GM10248 (cell line): ENCODE measurements at regions of chr20 and their contacts with region 1.

Region 1: DNA sequence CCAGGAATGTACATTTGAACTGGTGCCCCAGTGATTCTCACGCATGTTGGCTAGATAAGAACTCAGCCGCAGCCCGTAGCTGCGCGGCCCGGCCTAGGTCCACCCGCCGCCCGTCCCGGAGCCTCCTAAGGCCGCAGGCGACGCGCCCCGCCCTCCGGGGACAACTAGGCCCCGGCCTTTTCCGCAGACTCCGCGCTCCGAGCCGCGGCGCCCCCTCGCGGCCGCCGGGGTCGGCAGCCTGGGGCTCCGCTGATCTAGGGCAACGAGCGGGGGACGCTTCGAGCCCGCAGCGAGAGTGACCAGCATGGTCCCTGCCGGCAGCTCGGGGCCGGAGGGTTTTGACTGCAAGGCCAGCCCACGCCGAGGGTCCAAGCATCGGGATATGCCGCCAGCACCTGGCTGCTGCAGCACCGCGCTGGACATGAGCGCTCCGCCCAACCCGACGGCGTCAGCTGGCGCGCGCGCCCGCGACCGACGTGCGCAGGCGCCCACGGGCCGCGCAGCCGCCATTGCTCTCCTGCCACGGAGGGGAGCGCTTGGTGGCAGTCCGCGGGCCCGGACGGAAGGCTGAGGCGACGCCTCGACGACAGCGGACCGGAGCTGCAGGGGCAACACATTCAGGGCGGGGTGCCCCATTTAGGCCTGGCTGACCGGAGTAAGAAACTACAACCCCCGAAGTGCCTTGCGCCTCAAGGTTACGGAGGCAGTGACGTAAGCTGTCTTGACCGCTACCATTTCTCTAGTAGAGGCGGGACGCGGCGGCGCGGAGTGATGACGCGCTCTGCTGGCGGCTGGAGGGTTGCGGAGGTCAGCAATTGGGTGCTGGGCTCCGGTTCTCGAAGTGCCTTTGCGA is at the start of gene AP5S1:
- DNase-seq: peak; percentile 92
- CTCF ChIP-seq: peak; percentile 96

Region 2: DNA sequence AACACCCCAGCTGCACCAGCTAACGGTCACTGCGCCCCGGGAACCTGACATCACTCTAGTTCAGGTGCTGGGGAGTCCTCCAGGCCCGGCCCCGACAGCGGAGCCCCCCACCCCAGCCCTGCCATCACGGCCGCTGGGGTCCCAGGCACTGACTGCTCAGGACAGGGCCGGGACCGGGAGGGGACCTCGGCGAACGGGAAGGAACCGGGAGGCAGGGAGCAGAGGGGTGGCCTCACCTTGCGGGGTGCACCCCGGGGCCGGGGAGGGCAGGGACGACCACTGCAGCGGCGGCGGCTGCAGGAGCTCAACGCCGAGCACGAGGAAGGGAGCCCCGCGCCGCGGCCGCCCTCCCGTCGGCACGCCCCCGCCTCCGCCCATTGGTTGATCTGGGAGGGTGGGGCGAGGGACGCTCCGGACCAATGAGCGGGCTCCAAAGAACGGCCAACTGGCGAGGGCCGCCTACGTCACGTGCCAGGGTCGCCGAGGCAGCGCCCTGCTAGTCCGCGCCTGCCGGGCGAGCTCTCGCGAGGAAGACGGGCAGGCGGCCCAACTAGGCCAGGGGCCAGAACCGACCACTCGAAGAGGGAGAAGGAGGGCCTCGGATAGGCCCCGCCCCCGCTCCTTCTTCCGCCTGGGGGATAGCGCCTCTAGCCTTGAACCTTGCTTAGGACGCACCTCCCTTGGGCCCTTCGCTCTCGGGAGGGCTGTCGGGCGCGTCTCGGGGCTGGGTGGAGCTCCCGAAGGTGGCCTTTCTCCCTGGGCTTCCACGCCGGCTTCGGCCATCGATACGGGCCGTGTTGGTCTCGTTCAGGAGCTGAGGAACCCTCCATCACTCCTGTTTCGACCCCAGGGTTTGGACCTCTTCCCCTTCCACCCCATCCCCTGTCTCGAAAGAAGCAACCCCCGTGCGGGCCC is 52.6 kb before region 1 on chr20 and contains the start of gene ADISSP:
- CTCF ChIA-PET with region 1: interaction called, 12 read pairs
- POLR2A ChIA-PET with region 1: no interaction called
- DNase-seq: peak; percentile 100
- CTCF ChIP-seq: peak; percentile 21

Region 3: DNA sequence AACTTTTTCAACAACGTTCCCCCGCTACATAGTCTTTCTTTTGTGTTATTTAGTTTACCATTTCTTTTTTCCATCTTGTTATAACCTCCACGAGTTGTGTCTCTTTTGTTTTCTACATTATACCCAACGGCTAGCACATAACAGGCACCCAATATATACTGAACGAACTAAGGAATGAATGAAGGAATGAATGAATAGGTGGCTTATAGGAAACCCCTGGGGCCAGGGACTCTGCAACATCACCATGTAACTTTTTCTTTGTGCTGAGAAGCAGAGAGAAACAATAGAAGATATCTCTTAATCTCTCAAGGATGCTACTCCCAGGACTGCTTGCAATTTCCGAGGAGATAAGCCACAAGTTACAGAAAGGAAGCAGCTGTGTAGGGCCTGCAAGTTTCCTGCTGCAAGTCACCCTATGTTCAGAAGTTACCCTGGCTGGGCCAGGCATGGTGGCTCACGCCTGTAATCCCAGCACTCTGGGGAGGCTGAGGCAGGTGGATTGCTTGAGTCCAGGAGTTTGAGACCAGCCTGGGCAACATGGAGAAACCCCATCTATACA is 19.0 kb after region 1 on chr20:
- CTCF ChIA-PET with region 1: interaction called, 11 read pairs
- POLR2A ChIA-PET with region 1: no interaction called
- DNase-seq: peak; percentile 15
- CTCF ChIP-seq: no peak

Region 4: GRCh38 chr20:3854462-3854871 is 34.2 kb after region 1 on chr20:
- CTCF ChIA-PET with region 1: interaction called, 11 read pairs
- POLR2A ChIA-PET with region 1: interaction called, 7 read pairs
- DNase-seq: no peak
- CTCF ChIP-seq: no peak

Region 5: GRCh38 chr20:3995067-3995748 is 174.9 kb after region 1 on chr20:
- CTCF ChIA-PET with region 1: no interaction called
- POLR2A ChIA-PET with region 1: no interaction called
- DNase-seq: no peak
- CTCF ChIP-seq: no peak

Region 6: DNA sequence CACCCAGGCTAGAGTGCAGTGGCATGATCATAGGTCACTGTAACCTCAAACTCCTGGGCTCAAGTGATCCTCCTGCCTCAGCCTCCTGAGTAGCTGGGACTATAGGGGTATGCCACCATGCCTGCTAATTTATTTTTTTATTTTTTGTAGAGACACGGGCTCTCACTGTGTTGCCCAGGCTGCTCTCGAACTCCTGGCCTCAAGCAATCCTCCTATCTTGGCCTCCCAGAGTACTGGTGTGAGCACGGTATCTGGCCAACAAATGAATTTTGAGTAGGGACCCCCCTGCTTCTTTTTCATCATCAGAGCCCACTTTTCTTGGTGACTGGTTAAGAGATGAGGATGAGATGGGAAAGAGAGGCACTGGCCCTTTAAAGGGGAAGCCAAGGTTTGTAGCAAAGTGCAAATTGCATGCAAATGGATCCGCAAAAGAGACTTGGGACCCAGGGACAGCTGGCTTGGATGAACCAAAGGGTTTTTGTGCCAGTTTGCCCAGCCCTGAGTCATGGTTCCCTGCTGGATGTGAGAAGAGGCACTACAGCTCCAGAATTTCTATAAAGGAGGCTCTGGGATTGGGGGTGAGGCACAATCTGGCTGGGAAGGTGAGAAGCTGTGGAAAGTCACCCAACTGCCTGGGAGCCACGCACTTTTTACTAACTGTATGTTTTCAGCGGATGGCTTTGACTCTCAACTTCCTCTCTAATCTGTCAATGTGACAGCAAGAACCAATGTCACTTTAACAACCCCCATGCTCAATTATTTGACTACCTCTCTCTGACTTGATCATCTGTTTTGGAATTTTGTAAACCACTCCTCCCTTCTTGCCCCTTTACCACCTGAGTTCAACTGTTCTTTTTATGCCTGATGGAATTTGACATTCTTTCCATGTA is 253.8 kb after region 1 on chr20:
- CTCF ChIA-PET with region 1: interaction called, 13 read pairs
- POLR2A ChIA-PET with region 1: no interaction called
- DNase-seq: no peak
- CTCF ChIP-seq: no peak